GM10248 (cell line): ENCODE measurements at regions of chr2 and their contacts with region 1.

Region 1: GRCh38 chr2:203453858-203454451 is 81.1 kb downstream of the RAPH1 start:
- DNase-seq: peak; percentile 57
- CTCF ChIP-seq: peak; percentile 64

Region 2: GRCh38 chr2:203469554-203469953 is 15.6 kb after region 1 on chr2:
- CTCF ChIA-PET with region 1: interaction called, 12 read pairs
- POLR2A ChIA-PET with region 1: no interaction called
- DNase-seq: no peak
- CTCF ChIP-seq: no peak